Colonic mucosa (tissue), 4 donors: ENCODE measurements at regions of chr22 and their contacts with region 1.

Region 1: DNA sequence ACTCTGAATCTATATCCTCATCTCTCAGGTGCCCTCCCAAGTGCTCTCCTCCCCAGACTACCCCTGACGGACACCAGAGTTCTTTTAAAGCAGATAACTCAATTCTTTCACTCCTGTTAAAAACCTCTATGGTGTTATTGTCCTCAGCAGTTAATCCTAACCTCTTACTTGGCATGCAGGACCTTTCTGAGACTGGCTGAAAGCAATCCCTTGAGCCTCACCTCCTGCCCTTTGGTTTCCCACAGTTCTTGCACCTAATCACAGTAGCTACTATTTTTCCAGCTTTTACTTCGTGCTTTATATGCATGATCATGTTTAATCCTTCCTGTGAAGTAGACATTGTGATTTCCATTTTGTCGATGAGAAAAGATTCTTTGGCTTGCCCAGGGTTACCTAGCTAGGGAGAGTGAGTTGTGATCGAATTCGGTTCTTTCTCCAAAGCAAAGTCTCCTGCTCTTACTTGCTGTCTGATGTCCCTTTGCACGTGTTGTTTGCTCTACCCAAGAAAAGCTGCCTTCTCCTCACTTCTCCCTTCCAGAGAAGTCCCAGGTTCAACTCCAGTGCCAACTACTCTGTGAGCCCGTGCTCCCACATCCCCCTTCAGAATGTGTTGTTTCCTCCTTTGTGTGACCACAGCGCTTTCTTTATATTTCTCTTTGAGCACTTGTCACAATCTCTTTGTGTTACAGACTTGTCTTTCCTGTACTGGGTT is 2.1 kb downstream of the UBE2L3 start:
- DNase-seq: no peak
- H3K4me3 ChIP-seq: no peak overlapping the region
- H3K27ac ChIP-seq: no peak overlapping the region
- H3K4me1 ChIP-seq: peaks cover 22% of the 10 kb centered on the region
- H3K27me3 ChIP-seq: no peaks in the 10 kb centered on the region
- CTCF ChIP-seq: no peak

Region 2: GRCh38 chr22:21641789-21642583 is 72.4 kb after region 1 on chr22 and contains the start of gene SDF2L1:
- intact Hi-C with region 1: loop called (anchors 2 kb)
- DNase-seq: peak; percentile 99
- H3K4me3 ChIP-seq: peak within 1 kb of the TSS; percentile 80
- H3K27ac ChIP-seq: peak within 1 kb of the TSS; percentile 33
- H3K4me1 ChIP-seq: peaks cover 4% of the 10 kb centered on the region
- H3K27me3 ChIP-seq: no peaks in the 10 kb centered on the region
- CTCF ChIP-seq: no peak
- total RNA-seq, gene SDF2L1: 48.8 to 177 TPM

Region 3: GRCh38 chr22:21690401-21690801 is 120.8 kb after region 1 on chr22:
- intact Hi-C with region 1: no loop called
- DNase-seq: no peak
- H3K4me3 ChIP-seq: no peak overlapping the region
- H3K27ac ChIP-seq: no peak overlapping the region
- H3K4me1 ChIP-seq: no peaks in the 10 kb centered on the region
- H3K27me3 ChIP-seq: no peaks in the 10 kb centered on the region
- CTCF ChIP-seq: no peak

Region 4: DNA sequence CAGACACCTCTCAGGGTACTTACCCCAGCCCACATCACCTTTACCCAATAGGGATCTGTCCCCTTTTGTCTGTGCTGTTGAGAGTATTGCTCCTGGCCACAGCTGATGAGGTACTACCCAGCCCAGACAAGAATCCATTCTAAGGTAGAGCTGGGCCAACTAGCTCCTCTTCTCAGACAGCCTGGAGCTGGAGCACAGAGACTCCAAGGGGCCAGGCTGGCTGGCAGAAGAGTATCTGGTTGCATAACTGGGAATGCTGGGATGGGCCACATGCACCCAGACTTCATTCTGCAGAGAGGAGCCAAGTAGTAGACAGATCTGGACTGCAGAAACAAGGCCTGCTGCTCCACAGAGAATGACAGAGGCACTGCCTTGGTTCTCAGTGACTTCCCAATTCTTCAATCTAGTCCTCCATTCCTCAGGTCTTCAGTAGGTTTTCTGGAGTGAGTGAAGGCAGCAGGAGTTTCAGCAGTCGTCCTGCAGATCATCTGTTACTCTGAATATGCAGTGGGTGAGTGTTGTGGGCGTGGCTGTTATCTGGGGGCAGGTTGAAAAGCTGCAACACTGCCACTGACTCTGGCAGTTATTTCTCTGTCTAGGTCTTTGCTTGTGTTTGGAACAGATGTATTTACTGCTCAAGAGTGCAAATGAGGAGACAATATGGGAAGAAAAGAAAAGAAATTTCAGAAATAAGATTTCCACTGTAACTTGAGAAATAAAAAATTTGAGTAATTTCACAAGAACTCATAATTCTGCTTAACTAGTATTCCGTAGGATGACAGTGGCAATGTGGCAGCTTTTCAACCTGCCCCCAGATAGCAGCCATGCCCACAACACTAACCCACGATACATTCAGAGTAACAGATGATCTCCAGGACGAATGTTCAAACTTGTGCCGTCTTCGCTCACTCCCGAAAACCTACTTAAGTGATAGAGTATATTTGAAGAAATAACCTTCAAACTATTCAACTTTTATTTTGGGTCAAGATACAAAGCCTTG is 263.0 kb after region 1 on chr22:
- intact Hi-C with region 1: no loop called
- DNase-seq: no peak
- H3K4me3 ChIP-seq: no peak overlapping the region
- H3K27ac ChIP-seq: no peak overlapping the region
- H3K4me1 ChIP-seq: no peaks in the 10 kb centered on the region
- H3K27me3 ChIP-seq: no peaks in the 10 kb centered on the region
- CTCF ChIP-seq: no peak